Ascending aorta (tissue), 2 donors: ENCODE measurements at regions of chr3 and their contacts with region 1.

Region 1: DNA sequence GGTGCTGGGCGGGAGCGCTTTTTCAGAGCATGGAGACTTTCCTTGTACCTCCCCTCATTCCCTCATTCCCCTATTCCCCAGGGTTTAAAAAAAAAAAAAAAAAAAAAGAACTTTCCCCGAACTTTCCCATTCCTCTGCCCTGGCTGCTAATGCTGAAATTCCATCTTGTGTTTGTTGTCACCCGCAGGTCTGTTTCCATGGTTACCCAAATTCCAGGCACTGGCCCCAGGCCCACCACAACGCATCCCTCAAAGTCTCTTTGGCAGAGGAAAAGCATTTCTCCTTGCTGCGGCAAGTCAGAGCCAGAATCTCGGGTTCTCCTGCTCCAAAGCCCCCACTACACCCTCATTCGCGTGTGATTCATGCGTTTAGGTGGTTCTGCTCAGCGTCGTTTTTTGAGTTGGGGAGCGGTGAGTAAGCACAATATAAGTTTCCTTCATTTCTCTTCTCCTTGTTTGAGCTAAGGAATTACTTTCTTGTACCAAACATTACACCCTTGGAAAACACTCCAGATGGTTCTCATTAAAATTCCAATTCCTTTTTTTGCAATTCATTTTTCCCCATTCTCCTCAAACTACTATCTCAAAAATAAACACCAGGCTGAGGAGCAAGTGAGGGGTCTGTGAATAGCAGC is 21.6 kb downstream of the ANAPC13 start:
- DNase-seq: peak in 1 of 2 donors; percentile 94
- H3K4me3 ChIP-seq: peak overlapping the region in 1 of 2 donors; percentile 39
- H3K27ac ChIP-seq: peak overlapping the region; percentile 80 to 83
- H3K4me1 ChIP-seq: peaks cover 17 to 46% of the 10 kb centered on the region in 2 donors
- H3K27me3 ChIP-seq: no peaks in the 10 kb centered on the region
- CTCF ChIP-seq: no peak

Region 2: GRCh38 chr3:134231131-134231530 is 233.1 kb before region 1 on chr3:
- intact Hi-C with region 1: no loop called
- DNase-seq: no peak
- H3K4me3 ChIP-seq: no peak overlapping the region
- H3K27ac ChIP-seq: no peak overlapping the region
- H3K4me1 ChIP-seq: peaks cover 4 to 20% of the 10 kb centered on the region in 2 donors
- H3K27me3 ChIP-seq: no peaks in the 10 kb centered on the region
- CTCF ChIP-seq: no peak

Region 3: GRCh38 chr3:134373994-134374790 is 90.0 kb before region 1 on chr3 and contains the start of gene AMOTL2:
- intact Hi-C with region 1: loop called (anchors 1 kb)
- DNase-seq: peak in 1 of 2 donors; percentile 93
- H3K4me3 ChIP-seq: peak within 1 kb of the TSS; percentile 70 to 90
- H3K27ac ChIP-seq: peak within 1 kb of the TSS; percentile 93 to 99
- H3K4me1 ChIP-seq: peaks cover 24 to 36% of the 10 kb centered on the region in 2 donors
- H3K27me3 ChIP-seq: no peaks in the 10 kb centered on the region
- CTCF ChIP-seq: no peak
- total RNA-seq, gene AMOTL2: 156 TPM

Region 4: DNA sequence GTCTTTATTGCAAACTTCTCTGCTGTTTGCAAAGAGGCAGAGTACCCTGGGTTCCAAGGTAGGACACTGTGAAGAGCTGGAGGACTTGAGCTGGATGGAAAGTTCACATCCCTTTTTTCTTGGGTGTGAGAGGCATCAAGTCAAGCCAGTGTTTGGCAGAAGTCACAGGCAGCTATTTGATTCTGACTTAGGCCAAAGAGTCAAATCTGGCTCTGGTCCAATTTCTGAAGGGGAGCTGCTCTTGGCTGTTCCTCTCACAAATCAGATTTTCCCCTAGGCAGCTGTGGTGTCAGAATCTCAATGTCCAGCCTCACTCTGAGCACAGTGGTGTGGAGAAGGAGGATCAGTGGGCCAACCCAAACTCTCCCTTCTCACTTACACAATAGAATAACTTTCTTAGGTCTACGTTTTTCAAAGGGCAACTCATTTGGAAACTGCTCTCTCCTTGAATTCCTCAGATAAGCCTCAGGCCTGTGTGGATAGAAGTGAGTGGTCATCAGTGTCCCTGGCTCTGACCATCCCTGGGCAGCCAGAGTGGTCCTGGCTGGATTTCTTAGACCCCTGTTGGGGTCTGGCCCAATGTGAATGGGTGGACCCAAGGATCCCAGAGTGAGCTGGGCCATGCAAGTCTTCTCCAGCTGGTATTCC is 71.7 kb before region 1 on chr3:
- intact Hi-C with region 1: loop called (anchors 1 kb)
- DNase-seq: peak in 1 of 2 donors; percentile 86
- H3K4me3 ChIP-seq: peak overlapping the region in 1 of 2 donors; percentile 5
- H3K27ac ChIP-seq: peak overlapping the region; percentile 85 to 86
- H3K4me1 ChIP-seq: peaks cover 4 to 46% of the 10 kb centered on the region in 2 donors
- H3K27me3 ChIP-seq: no peaks in the 10 kb centered on the region
- CTCF ChIP-seq: no peak

Region 5: DNA sequence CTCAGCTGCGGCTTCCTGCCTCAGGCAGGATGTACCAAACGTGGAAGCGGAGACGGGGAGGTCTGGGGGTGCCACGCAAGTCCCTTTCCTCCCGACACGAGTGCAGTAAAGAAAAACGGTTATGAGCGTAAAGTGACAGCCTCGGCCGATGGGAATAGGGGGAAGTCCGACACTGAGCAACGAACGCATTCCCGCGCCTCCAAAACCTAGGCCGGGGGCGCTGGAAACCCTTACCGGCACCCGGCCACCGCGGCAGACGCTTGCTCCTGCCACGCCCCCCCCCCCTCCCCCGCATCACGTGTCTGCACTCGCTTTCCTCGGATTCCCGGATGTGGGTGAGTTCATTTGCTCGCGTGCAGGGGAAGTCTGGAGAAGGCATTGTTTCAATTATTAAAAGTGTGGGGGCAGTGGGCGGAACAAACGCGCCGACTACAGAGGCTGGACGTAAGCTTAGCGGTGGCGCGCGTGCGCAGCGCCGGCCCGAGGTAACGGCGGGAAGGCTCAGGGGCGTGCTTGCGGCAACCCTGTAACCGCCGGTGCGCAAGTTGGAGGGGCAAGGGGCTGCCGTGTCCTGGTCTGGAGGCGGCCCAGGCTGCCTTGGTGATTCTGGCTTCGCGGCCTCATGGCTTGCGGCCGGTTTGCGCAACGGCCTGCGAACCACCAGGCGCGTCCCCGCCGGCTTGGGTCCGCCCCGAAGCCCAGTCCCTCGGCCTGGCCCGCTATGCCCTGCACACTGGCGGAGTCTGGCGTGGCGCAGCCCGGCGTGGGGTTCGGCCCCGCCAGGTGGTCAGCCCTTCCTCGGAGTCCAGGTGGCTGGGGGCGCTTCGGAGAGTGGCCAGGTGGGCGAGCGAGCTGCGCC is 21.8 kb after region 1 on chr3 and contains the starts of genes ANAPC13 and CEP63:
- intact Hi-C with region 1: loop called (anchors 1 kb)
- DNase-seq: peak; percentile 80 to 98
- H3K4me3 ChIP-seq: peak within 1 kb of the TSS; percentile 78 to 92
- H3K27ac ChIP-seq: peak within 1 kb of the TSS; percentile 95 to 98
- H3K4me1 ChIP-seq: peaks cover 26 to 38% of the 10 kb centered on the region in 2 donors
- H3K27me3 ChIP-seq: no peaks in the 10 kb centered on the region
- CTCF ChIP-seq: no peak
- total RNA-seq, gene ANAPC13: 17.0 TPM
- total RNA-seq, gene CEP63: 5.3 TPM